A673 (cell line): ENCODE measurements at regions of chr21 and their contacts with region 1.

Region 1: GRCh38 chr21:35840197-35840799 is 220.0 kb downstream of the SETD4 start:
- DNase-seq: peak; percentile 72
- H3K4me3 ChIP-seq: no peak overlapping the region
- H3K27ac ChIP-seq: no peak overlapping the region
- H3K4me1 ChIP-seq: no peaks in the 10 kb centered on the region
- H3K27me3 ChIP-seq: peaks cover 8% of the 10 kb centered on the region
- CTCF ChIP-seq: peak; percentile 90

Region 2: GRCh38 chr21:34693192-34693810 is 1147.0 kb before region 1 on chr21:
- CTCF ChIA-PET with region 1: no interaction called
- POLR2A ChIA-PET with region 1: no interaction called
- intact Hi-C with region 1: loop called (anchors 10 kb)
- DNase-seq: peak; percentile 76
- H3K4me3 ChIP-seq: no peak overlapping the region
- H3K27ac ChIP-seq: no peak overlapping the region
- H3K4me1 ChIP-seq: no peaks in the 10 kb centered on the region
- H3K27me3 ChIP-seq: peaks cover 12% of the 10 kb centered on the region
- CTCF ChIP-seq: peak; percentile 83

Region 3: GRCh38 chr21:34888569-34889319 is 951.6 kb before region 1 on chr21:
- CTCF ChIA-PET with region 1: interaction called, 7 read pairs
- POLR2A ChIA-PET with region 1: interaction called, 5 read pairs
- intact Hi-C with region 1: loop called (anchors 5 kb)
- DNase-seq: peak; percentile 88
- H3K4me3 ChIP-seq: peak overlapping the region; percentile 40
- H3K27ac ChIP-seq: no peak overlapping the region
- H3K4me1 ChIP-seq: peaks cover 19% of the 10 kb centered on the region
- H3K27me3 ChIP-seq: peaks cover 96% of the 10 kb centered on the region
- CTCF ChIP-seq: no peak